ENCODE measurements at regions of chr7 and their contacts with region 1.

Region 1: DNA sequence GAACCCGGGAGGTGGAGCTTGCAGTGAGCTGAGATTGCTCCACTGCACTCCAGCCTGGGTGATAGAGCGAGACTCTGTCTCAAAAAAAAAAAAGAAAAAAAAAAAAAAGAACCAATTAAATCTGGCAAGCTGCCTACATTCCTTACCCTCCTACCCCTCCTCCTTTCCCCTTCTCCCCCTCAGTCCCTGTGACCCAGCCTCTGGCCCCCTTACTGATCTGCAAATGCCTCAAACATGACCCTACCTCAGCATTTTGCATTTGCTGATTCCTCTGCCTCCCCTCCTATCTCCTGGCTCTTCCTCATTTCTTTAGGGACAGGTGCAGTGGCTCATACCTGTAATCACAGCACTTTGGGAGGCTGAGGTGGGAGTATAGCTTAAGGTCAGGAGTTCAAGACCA is 19.3 kb downstream of the CDHR3 start:
- DNase-seq: no peak
- ATAC-seq: no peak
- H3K4me3 ChIP-seq: no peak overlapping the region
- H3K4me3 Mint-ChIP-seq: no peak overlapping the region
- H3K27ac ChIP-seq: no peak overlapping the region
- H3K27ac Mint-ChIP-seq: no peak overlapping the region
- H3K4me1 ChIP-seq: no peaks in the 10 kb centered on the region
- H3K4me1 Mint-ChIP-seq: no peaks in the 10 kb centered on the region
- H3K27me3 ChIP-seq: no peaks in the 10 kb centered on the region
- H3K27me3 Mint-ChIP-seq: peaks cover 4 to 5% of the 10 kb centered on the region in 2 donors

Region 2: GRCh38 chr7:105943486-105943885 is 38.9 kb before region 1 on chr7:
- CTCF ChIA-PET with region 1: no interaction called
- POLR2A ChIA-PET with region 1: interaction called in 1 of 2 experiments, 13 read pairs
- DNase-seq: no peak
- ATAC-seq: no peak
- H3K4me3 ChIP-seq: no peak overlapping the region
- H3K4me3 Mint-ChIP-seq: no peak overlapping the region
- H3K27ac ChIP-seq: no peak overlapping the region
- H3K27ac Mint-ChIP-seq: no peak overlapping the region
- H3K4me1 ChIP-seq: no peaks in the 10 kb centered on the region
- H3K4me1 Mint-ChIP-seq: no peaks in the 10 kb centered on the region
- H3K27me3 ChIP-seq: peaks cover 0 to 4% of the 10 kb centered on the region in 2 experiments
- H3K27me3 Mint-ChIP-seq: no peaks in the 10 kb centered on the region

Region 3: DNA sequence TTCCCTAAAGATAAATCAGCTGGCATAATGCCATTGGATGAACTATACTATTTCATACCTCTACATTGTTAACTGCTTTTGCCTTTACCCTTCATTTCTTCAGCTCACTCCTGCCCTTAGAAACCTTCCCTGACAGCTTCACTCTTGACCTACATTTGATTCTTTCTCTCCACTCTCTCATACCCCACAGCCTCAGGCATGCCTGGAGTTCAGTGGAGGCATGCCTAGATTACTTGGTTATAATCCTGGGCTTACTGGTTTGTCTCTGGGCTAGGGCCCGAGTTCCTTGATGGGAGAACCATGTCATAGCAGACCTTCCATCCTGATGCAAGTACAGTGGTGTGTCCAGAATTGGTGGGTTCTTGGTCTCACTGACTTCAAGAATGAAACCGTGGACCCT is 27.7 kb before region 1 on chr7:
- CTCF ChIA-PET with region 1: no interaction called
- POLR2A ChIA-PET with region 1: no interaction called
- DNase-seq: no peak
- ATAC-seq: no peak
- H3K4me3 ChIP-seq: no peak overlapping the region
- H3K4me3 Mint-ChIP-seq: no peak overlapping the region
- H3K27ac ChIP-seq: no peak overlapping the region
- H3K27ac Mint-ChIP-seq: no peak overlapping the region
- H3K4me1 ChIP-seq: no peaks in the 10 kb centered on the region
- H3K4me1 Mint-ChIP-seq: no peaks in the 10 kb centered on the region
- H3K27me3 ChIP-seq: peaks cover 0 to 3% of the 10 kb centered on the region in 2 experiments
- H3K27me3 Mint-ChIP-seq: peaks cover 0 to 14% of the 10 kb centered on the region in 2 donors